ENCODE measurements at regions of chr4 and their contacts with region 1.

Region 1: GRCh38 chr4:146916479-146917076 is 29.1 kb downstream of the TTC29 start:
- DNase-seq: peak; percentile 2
- ATAC-seq: 0 out of 3 replicates have a peak, but pooled peaks have one; percentile 27
- H3K4me3 ChIP-seq: no peak overlapping the region
- H3K27ac ChIP-seq: no peak overlapping the region
- H3K4me1 ChIP-seq: no peaks in the 10 kb centered on the region
- H3K27me3 ChIP-seq: no peaks in the 10 kb centered on the region
- CTCF ChIP-seq: peak; percentile 57 to 65 (median 63)
- EP300 ChIP-seq: no peak
- POLR2A ChIP-seq: no peak
- RAD21 ChIP-seq: peak; percentile 86

Region 2: GRCh38 chr4:145956288-145956890 is 960.2 kb before region 1 on chr4:
- CTCF ChIA-PET with region 1: no interaction called
- POLR2A ChIA-PET with region 1: no interaction called
- RAD21 ChIA-PET with region 1: no interaction called
- SMC1A ChIA-PET with region 1: interaction called, 3 read pairs
- in situ Hi-C with region 1: loop called (anchors 25 kb)
- intact Hi-C with region 1: loop called (anchors 2 kb)
- DNase-seq: no peak
- ATAC-seq: peak; percentile 86
- H3K4me3 ChIP-seq: no peak overlapping the region
- H3K27ac ChIP-seq: no peak overlapping the region
- H3K4me1 ChIP-seq: no peaks in the 10 kb centered on the region
- H3K27me3 ChIP-seq: no peaks in the 10 kb centered on the region
- CTCF ChIP-seq: peak; percentile 67 to 78 (median 78)
- EP300 ChIP-seq: no peak
- POLR2A ChIP-seq: no peak
- RAD21 ChIP-seq: peak; percentile 75

Region 3: GRCh38 chr4:146235654-146236177 is 680.9 kb before region 1 on chr4:
- CTCF ChIA-PET with region 1: interaction called, 4 read pairs
- POLR2A ChIA-PET with region 1: no interaction called
- RAD21 ChIA-PET with region 1: no interaction called
- SMC1A ChIA-PET with region 1: interaction called, 3 read pairs
- in situ Hi-C with region 1: loop called (anchors 5 kb)
- intact Hi-C with region 1: no loop called
- DNase-seq: no peak
- ATAC-seq: no peak
- H3K4me3 ChIP-seq: no peak overlapping the region
- H3K27ac ChIP-seq: no peak overlapping the region
- H3K4me1 ChIP-seq: no peaks in the 10 kb centered on the region
- H3K27me3 ChIP-seq: no peaks in the 10 kb centered on the region
- CTCF ChIP-seq: no peak
- EP300 ChIP-seq: no peak
- POLR2A ChIP-seq: no peak
- RAD21 ChIP-seq: no peak

Region 4: GRCh38 chr4:146243141-146243882 is 673.3 kb before region 1 on chr4:
- CTCF ChIA-PET with region 1: interaction called, 4 read pairs
- POLR2A ChIA-PET with region 1: no interaction called
- RAD21 ChIA-PET with region 1: interaction called, 3 read pairs
- SMC1A ChIA-PET with region 1: interaction called, 3 read pairs
- in situ Hi-C with region 1: loop called (anchors 5 kb)
- intact Hi-C with region 1: loop called (anchors 1 kb)
- DNase-seq: peak; percentile 45
- ATAC-seq: peak; percentile 85
- H3K4me3 ChIP-seq: no peak overlapping the region
- H3K27ac ChIP-seq: no peak overlapping the region
- H3K4me1 ChIP-seq: peaks cover 24% of the 10 kb centered on the region
- H3K27me3 ChIP-seq: no peaks in the 10 kb centered on the region
- CTCF ChIP-seq: peak; percentile 58 to 77 (median 73)
- EP300 ChIP-seq: no peak; a peak in 1 of 4 replicates
- POLR2A ChIP-seq: no peak
- RAD21 ChIP-seq: peak; percentile 27; the same call in 1 of the 2 replicates

Region 5: DNA sequence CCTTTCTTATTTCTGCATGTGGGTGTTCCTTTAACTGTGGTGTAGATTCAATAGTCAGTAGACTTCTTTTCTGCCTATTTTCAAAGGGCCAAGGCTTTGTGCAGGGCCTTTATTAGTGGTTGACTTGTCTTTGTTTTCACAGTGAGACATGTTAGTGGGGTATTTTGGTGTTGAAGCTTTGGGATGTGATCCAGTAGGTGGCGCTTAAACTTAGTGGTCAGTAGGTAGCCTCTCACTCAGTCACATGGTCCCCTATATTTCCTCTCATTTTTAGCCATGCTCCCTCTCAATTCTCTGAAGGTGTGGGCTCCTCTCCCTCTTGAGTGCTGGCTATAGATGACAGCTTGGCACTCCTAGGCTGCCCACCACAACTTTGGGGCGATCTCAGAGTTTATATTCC is 371.5 kb before region 1 on chr4:
- CTCF ChIA-PET with region 1: no interaction called
- POLR2A ChIA-PET with region 1: no interaction called
- RAD21 ChIA-PET with region 1: no interaction called
- SMC1A ChIA-PET with region 1: interaction called, 3 read pairs
- in situ Hi-C with region 1: no loop called
- intact Hi-C with region 1: loop called (anchors 10 kb)
- DNase-seq: no peak
- ATAC-seq: peak; percentile 92
- H3K4me3 ChIP-seq: no peak overlapping the region
- H3K27ac ChIP-seq: no peak overlapping the region
- H3K4me1 ChIP-seq: no peaks in the 10 kb centered on the region
- H3K27me3 ChIP-seq: no peaks in the 10 kb centered on the region
- CTCF ChIP-seq: peak; percentile 34 to 47 (median 41)
- EP300 ChIP-seq: no peak
- POLR2A ChIP-seq: no peak
- RAD21 ChIP-seq: peak; percentile 20; the same call in 1 of the 2 replicates

Region 6: GRCh38 chr4:146742416-146742815 is 174.2 kb before region 1 on chr4:
- CTCF ChIA-PET with region 1: no interaction called
- POLR2A ChIA-PET with region 1: no interaction called
- RAD21 ChIA-PET with region 1: no interaction called
- SMC1A ChIA-PET with region 1: no interaction called
- in situ Hi-C with region 1: no loop called
- intact Hi-C with region 1: no loop called
- DNase-seq: no peak
- ATAC-seq: no peak
- H3K4me3 ChIP-seq: no peak overlapping the region
- H3K27ac ChIP-seq: no peak overlapping the region
- H3K4me1 ChIP-seq: no peaks in the 10 kb centered on the region
- H3K27me3 ChIP-seq: no peaks in the 10 kb centered on the region
- CTCF ChIP-seq: no peak
- EP300 ChIP-seq: no peak
- POLR2A ChIP-seq: no peak
- RAD21 ChIP-seq: no peak

Region 7: GRCh38 chr4:147011411-147011810 is 94.8 kb after region 1 on chr4:
- CTCF ChIA-PET with region 1: no interaction called
- POLR2A ChIA-PET with region 1: no interaction called
- RAD21 ChIA-PET with region 1: no interaction called
- SMC1A ChIA-PET with region 1: no interaction called
- in situ Hi-C with region 1: no loop called
- intact Hi-C with region 1: no loop called
- DNase-seq: no peak
- ATAC-seq: no peak
- H3K4me3 ChIP-seq: no peak overlapping the region
- H3K27ac ChIP-seq: no peak overlapping the region
- H3K4me1 ChIP-seq: no peaks in the 10 kb centered on the region
- H3K27me3 ChIP-seq: no peaks in the 10 kb centered on the region
- CTCF ChIP-seq: no peak
- EP300 ChIP-seq: no peak
- POLR2A ChIP-seq: no peak
- RAD21 ChIP-seq: no peak

Region 8: DNA sequence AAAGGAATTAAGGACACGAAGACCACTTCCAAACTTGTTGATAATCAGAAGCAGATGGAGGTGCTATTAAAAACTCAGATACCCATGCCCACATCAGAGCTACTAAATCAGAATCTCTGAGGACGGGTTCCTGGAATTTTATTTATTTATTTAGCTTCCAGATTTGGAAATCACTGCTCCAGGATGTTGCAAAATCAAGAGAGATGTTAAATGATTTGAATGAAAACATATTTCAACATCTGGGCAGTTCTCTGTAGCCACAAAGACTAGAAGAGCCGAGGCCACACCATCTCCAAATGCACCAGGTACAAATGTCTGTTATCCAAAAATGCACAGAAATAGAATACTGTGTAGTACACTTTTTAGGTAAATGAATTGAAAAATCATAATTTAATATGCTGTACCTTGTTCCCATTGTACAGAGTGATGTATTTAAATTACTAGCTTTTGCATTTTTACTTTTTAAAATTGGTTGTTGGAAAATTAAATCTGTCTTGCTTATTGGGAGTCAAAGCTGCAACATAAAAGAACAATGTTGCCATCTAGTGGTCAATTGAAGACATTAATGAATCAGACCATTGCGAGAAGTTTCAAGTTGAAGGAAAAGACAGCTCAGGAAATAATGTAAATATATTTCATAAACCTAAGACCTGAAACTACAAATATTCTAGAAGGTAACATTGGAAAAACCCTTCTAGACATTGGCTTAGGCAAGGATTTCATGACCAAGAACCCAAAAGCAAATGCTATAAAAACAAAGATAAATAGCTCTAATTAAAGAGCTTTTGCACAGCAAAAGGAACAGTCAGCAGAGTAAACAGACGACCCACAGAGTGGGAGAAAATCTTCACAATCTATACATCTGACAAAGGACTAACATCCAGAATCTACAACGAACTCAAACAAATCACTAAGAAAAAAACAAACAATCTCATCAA is 180.4 kb after region 1 on chr4:
- CTCF ChIA-PET with region 1: interaction called, 3 read pairs
- POLR2A ChIA-PET with region 1: no interaction called
- RAD21 ChIA-PET with region 1: interaction called, 3 read pairs
- SMC1A ChIA-PET with region 1: interaction called, 3 read pairs
- in situ Hi-C with region 1: no loop called
- intact Hi-C with region 1: loop called (anchors 5 kb)
- DNase-seq: no peak
- ATAC-seq: peak; percentile 64
- H3K4me3 ChIP-seq: no peak overlapping the region
- H3K27ac ChIP-seq: no peak overlapping the region
- H3K4me1 ChIP-seq: no peaks in the 10 kb centered on the region
- H3K27me3 ChIP-seq: peaks cover 0 to 1% of the 10 kb centered on the region in 2 experiments; a peak in 2 of 4 replicates
- CTCF ChIP-seq: peak; percentile 32 to 66 (median 43); a peak in 5 of 6 replicates
- EP300 ChIP-seq: no peak
- POLR2A ChIP-seq: no peak
- RAD21 ChIP-seq: peak; percentile 86